ENCODE measurements at regions of chr2 and their contacts with region 1.

Region 1: DNA sequence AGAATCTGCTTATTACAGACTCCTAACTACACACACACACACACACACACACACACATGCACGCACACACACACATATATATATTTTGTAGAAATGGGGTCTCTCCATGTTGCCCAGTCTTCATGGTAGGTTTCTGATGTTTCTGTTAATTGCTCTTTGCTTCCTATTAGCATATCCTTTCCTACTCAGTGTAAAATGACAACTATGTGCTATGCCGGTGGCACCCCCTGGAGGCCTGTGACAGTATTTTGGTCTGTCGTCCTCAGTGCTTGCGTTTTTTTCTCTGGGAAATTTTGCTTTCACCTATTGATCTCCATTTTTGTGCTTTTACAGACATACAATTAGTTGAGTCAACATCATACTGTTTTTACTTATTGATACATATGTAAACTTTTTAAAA is 322.1 kb downstream of the LRRTM1 start:
- DNase-seq: peak; percentile 11 to 88 (median 64)

Region 2: DNA sequence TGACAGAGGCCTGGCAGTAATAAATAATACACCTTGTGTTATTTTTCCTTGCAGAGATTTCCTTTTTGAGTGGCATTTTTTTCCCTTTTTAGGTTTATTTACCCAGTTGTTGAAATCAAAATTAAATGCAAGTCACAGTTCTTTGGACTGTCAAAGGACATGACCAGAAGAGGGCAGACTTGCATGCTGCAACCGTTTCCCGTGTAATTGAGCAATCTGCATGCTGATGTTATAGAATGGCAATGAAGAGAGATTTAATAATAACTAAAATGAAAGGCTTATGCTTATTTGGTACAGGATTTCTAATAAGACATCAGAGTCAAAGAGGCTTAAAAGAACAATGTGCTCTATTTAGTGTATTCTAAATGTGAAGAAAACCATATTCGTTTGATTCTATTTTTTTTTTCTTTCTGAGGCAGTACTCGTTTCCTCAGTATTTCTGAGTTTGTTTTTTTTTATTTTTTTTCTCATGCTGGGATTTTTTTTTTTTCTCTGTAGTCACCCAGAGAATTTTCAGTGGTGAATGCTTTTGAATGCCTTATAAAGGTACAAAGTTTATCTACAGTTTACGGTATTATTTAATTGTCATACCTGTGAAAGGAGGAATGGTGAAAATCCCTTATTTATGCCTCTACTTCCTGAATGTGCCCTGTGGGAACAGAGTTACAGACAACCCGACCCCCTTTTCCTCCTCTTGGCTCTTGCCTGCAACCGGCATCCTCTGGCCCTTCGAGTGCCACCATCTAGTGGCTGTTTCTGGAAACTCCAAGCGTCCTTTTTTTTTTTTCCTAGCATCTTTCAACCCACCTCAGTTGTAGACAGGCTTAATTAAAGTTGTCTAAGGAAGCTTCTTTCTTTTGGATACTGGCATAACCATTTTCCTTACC is 46.4 kb before region 1 on chr2:
- intact Hi-C with region 1: loop called (anchors 5 kb)
- DNase-seq: peak; percentile 35 to 92 (median 80)

Region 3: DNA sequence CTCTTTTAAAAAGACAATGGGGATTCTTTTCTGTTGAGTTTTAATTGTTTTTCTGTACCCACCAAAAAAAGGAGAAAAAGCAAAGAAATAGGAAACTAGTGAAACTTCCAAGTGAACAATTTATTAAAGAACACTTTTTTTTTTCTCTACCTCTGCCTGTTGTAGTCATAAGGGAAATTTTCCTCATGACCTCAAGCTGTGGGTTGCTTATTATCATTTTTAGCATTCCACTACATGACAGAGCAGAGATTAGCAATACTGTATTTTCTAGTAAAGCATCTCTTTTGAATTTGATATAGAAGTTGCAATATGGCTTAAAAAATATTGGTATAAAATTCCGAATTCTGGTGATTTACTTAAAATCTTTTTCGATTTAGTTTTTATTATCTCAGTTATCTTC is 410.0 kb after region 1 on chr2:
- intact Hi-C with region 1: no loop called
- DNase-seq: no peak